ENCODE measurements at regions of chr3 and their contacts with region 1.

Region 1: DNA sequence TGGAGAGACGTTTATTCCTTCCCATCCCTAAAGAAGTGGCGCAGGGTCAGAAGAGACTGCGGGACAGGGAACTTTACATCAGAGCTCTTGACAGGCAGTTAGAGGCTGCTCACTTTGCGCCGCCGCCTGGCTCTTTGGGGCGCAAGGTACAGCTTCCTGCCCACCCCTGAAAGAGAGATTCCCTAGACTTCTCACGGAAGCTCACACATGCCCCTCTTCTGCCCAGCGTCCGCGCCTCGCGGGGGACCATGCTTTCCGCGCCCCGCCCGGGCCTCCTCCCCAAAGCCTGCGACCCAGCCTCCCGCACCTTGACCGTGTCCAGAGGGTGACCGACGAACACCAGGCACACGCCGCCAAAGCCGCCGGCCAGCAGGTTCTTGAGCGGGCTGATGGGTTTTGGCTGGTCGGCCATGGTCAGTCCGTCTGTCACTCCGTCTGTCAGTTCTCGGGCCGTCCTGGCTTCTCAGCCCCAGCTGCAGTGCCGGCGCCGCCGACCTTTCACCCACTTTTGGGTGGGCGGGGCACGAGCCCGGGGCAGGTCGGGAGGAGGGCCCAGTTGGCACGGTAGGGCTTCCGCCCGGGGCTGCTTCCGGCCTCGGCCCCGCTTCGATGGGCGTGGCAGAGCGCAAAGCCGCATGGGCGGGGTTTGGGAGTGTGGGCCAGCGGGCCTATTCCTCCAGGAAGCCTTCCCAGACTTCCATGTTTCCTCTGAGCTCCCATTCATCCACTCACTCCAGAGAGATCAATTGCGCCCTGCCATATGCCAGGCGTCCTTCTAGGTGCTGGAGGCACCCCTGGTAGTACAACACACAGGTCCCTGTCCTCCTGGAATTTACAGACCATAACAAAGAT is at the start of gene SLC25A20:
- DNase-seq: peak; percentile 88
- ATAC-seq: peak; percentile 99
- H3K4me3 Mint-ChIP-seq: peak within 1 kb of the TSS; percentile 92
- H3K27ac Mint-ChIP-seq: peak within 1 kb of the TSS; percentile 83
- H3K4me1 Mint-ChIP-seq: peaks cover 38% of the 10 kb centered on the region
- H3K27me3 Mint-ChIP-seq: no peaks in the 10 kb centered on the region
- CTCF ChIP-seq: no peak
- total RNA-seq, gene SLC25A20: 9.9 and 11.0 TPM in 2 replicates

Region 2: GRCh38 chr3:48716982-48717746 is 181.4 kb before region 1 on chr3 and contains the start of gene IP6K2:
- CTCF ChIA-PET with region 1: no interaction called
- POLR2A ChIA-PET with region 1: interaction called, 5 read pairs
- intact Hi-C with region 1: loop called (anchors 2 kb)
- DNase-seq: peak; percentile 98
- ATAC-seq: peak; percentile 99
- H3K4me3 Mint-ChIP-seq: peak within 1 kb of the TSS; percentile 98
- H3K27ac Mint-ChIP-seq: peak within 1 kb of the TSS; percentile 94
- H3K4me1 Mint-ChIP-seq: peaks cover 37% of the 10 kb centered on the region
- H3K27me3 Mint-ChIP-seq: peaks cover 4% of the 10 kb centered on the region
- CTCF ChIP-seq: no peak
- total RNA-seq, gene IP6K2: 83.2 and 94.1 TPM in 2 replicates

Measured in activated B cell treated with CpG ODN at 0.5 μM for 24 hours (primary cell).